Breast epithelium (tissue), 4 donors: ENCODE measurements at regions of chr2 and their contacts with region 1.

Region 1: DNA sequence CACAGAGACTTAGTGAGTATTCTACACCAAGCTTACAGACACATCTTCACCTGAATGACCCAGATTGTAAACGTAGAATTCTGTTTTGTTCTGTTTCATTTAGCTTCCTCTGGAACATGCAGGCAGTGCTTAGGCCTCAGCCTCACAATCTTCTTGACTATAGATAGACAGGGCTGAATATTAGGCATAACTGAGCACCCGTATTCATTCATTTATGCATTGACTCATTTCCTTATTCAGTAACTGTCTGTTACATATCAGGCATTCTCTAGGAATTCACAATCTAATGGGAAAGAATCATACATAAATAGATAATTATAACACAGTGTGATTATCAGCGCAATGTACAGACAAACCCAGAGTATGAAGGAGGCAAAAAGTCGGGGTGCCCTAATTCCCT is 124.9 kb upstream of the ETAA1 start:
- DNase-seq: no peak
- H3K4me3 ChIP-seq: no peak overlapping the region
- H3K27ac ChIP-seq: no peak overlapping the region
- H3K4me1 ChIP-seq: no peaks in the 10 kb centered on the region
- H3K27me3 ChIP-seq: no peaks in the 10 kb centered on the region
- CTCF ChIP-seq: no peak
- POLR2A ChIP-seq: no peak

Region 2: GRCh38 chr2:65866148-65866547 is 1406.0 kb before region 1 on chr2:
- intact Hi-C with region 1: loop called (anchors 5 kb)
- DNase-seq: no peak
- H3K4me3 ChIP-seq: no peak overlapping the region
- H3K27ac ChIP-seq: no peak overlapping the region
- H3K4me1 ChIP-seq: no peaks in the 10 kb centered on the region
- H3K27me3 ChIP-seq: no peaks in the 10 kb centered on the region
- CTCF ChIP-seq: no peak
- POLR2A ChIP-seq: no peak